CD8-positive, alpha-beta memory T cell (primary cell): ENCODE measurements at regions of chr10 and their contacts with region 1.

Region 1: DNA sequence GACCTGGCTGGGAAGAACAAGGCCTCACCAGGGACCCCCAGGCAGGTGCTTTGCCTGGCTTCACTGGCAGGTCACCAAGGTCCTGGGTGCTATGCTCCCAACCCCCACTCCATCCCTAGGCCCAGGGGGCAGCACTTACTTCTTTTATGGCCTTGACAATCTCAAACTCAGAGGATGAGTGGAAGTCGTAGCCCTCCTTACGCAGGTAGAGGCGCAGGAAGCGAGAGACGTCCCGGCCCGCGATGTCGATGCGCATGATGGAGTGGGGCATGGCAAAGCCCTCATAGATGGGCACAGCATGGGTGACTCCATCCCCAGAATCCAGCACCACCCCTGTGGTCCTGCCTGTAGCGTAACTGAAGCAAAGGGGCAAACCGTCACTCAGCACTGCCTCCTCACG is 18.5 kb downstream of the ACTR1A start:
- DNase-seq: no peak
- H3K4me3 ChIP-seq: no peak overlapping the region
- H3K4me3 Mint-ChIP-seq: no peak overlapping the region
- H3K27ac ChIP-seq: no peak overlapping the region
- H3K27ac Mint-ChIP-seq: peak overlapping the region in 1 of 8 donors; percentile 21
- H3K4me1 ChIP-seq: no peaks in the 10 kb centered on the region
- H3K4me1 Mint-ChIP-seq: peaks cover 1 to 2% (median 1%) of the 10 kb centered on the region in 3 donors
- H3K27me3 ChIP-seq: no peaks in the 10 kb centered on the region
- H3K27me3 Mint-ChIP-seq: no peaks in the 10 kb centered on the region

Region 2: GRCh38 chr10:102461187-102462054 is 22.6 kb before region 1 on chr10:
- CTCF ChIA-PET with region 1: interaction called, 10 read pairs
- POLR2A ChIA-PET with region 1: no interaction called
- DNase-seq: peak; percentile 87 to 95 (median 91)
- H3K4me3 ChIP-seq: peak overlapping the region; percentile 82
- H3K4me3 Mint-ChIP-seq: peak overlapping the region; percentile 84 to 94 (median 89)
- H3K27ac ChIP-seq: no peak overlapping the region
- H3K27ac Mint-ChIP-seq: peak overlapping the region in 7 of 8 donors; percentile 53 to 93 (median 84)
- H3K4me1 ChIP-seq: peaks cover 15% of the 10 kb centered on the region
- H3K4me1 Mint-ChIP-seq: peaks cover 21 to 29% (median 22%) of the 10 kb centered on the region in 3 donors
- H3K27me3 ChIP-seq: no peaks in the 10 kb centered on the region
- H3K27me3 Mint-ChIP-seq: peaks cover 0 to 4% of the 10 kb centered on the region in 2 donors

Region 3: GRCh38 chr10:102835007-102835482 is 351.0 kb after region 1 on chr10:
- CTCF ChIA-PET with region 1: no interaction called
- POLR2A ChIA-PET with region 1: no interaction called
- DNase-seq: peak; percentile 54 to 77 (median 60)
- H3K4me3 ChIP-seq: no peak overlapping the region
- H3K4me3 Mint-ChIP-seq: no peak overlapping the region
- H3K27ac ChIP-seq: no peak overlapping the region
- H3K27ac Mint-ChIP-seq: peak overlapping the region in 1 of 8 donors; percentile 24
- H3K4me1 ChIP-seq: no peaks in the 10 kb centered on the region
- H3K4me1 Mint-ChIP-seq: no peaks in the 10 kb centered on the region
- H3K27me3 ChIP-seq: no peaks in the 10 kb centered on the region
- H3K27me3 Mint-ChIP-seq: peaks cover 11 to 25% of the 10 kb centered on the region in 2 donors

Region 4: GRCh38 chr10:102917962-102918816 is 434.2 kb after region 1 on chr10 and contains the start of gene CNNM2:
- CTCF ChIA-PET with region 1: no interaction called
- POLR2A ChIA-PET with region 1: no interaction called
- DNase-seq: peak; percentile 99 to 100 (median 99)
- H3K4me3 ChIP-seq: peak within 1 kb of the TSS; percentile 96
- H3K4me3 Mint-ChIP-seq: peak within 1 kb of the TSS; percentile 93 to 96 (median 95)
- H3K27ac ChIP-seq: peak within 1 kb of the TSS; percentile 84
- H3K27ac Mint-ChIP-seq: peak within 1 kb of the TSS; percentile 86 to 97 (median 94)
- H3K4me1 ChIP-seq: peaks cover 38% of the 10 kb centered on the region
- H3K4me1 Mint-ChIP-seq: peaks cover 47 to 59% (median 59%) of the 10 kb centered on the region in 3 donors
- H3K27me3 ChIP-seq: no peaks in the 10 kb centered on the region
- H3K27me3 Mint-ChIP-seq: peaks cover 5 to 16% of the 10 kb centered on the region in 2 donors
- total RNA-seq, gene CNNM2: 6.1 to 6.2 TPM